PC-9 (cell line): ENCODE measurements at regions of chr13 and their contacts with region 1.

Region 1: GRCh38 chr13:99087096-99087953 is 109.5 kb upstream of the DOCK9 start:
- DNase-seq: peak; percentile 85 to 92
- H3K4me3 ChIP-seq: peak overlapping the region; percentile 84
- H3K27ac ChIP-seq: peak overlapping the region; percentile 72
- H3K4me1 ChIP-seq: peaks cover 37% of the 10 kb centered on the region
- H3K27me3 ChIP-seq: no peaks in the 10 kb centered on the region
- CTCF ChIP-seq: no peak; the same call in 1 of the 2 replicates

Region 2: DNA sequence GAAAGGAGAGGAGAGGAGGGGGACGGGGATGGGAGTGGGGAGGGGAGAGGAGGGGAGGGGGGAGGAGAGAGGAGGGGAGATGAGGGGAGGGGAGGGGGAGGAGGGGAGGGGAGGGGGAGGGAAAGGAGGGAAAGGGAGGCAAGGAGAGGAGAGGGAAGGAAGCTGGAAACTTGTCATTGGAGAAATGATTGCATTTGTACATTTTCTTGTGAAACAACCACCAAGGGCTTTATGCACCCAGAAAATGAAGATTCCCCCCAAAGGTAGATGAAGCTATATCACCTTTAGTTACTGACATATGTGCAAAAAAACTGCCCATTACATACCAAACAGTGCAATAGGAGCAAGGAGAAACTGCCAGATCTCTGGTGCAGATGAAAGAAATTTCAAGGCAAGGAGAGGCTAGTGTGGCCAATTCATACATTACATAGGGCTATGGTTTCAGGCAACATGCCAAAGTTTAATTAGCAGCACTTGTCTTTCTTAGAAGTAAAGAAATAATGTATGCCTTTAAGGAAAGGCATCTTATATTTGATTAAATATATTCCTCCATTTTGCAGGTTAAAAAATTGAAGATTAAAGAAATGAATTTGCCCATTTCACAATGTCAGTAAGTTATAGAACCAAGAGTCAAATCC is 460.9 kb before region 1 on chr13:
- CTCF ChIA-PET with region 1: interaction called, 10 read pairs
- POLR2A ChIA-PET with region 1: no interaction called
- intact Hi-C with region 1: no loop called
- DNase-seq: no peak
- H3K4me3 ChIP-seq: no peak overlapping the region
- H3K27ac ChIP-seq: no peak overlapping the region
- H3K4me1 ChIP-seq: no peaks in the 10 kb centered on the region
- H3K27me3 ChIP-seq: no peaks in the 10 kb centered on the region
- CTCF ChIP-seq: no peak

Region 3: GRCh38 chr13:99046851-99047250 is 40.5 kb before region 1 on chr13:
- CTCF ChIA-PET with region 1: interaction called, 5 read pairs
- POLR2A ChIA-PET with region 1: no interaction called
- intact Hi-C with region 1: loop called (anchors 2 kb)
- DNase-seq: no peak
- H3K4me3 ChIP-seq: peak overlapping the region; percentile 48
- H3K27ac ChIP-seq: peak overlapping the region; percentile 84
- H3K4me1 ChIP-seq: peaks cover 76% of the 10 kb centered on the region
- H3K27me3 ChIP-seq: no peaks in the 10 kb centered on the region
- CTCF ChIP-seq: no peak

Region 4: GRCh38 chr13:99124794-99125316 is 37.5 kb after region 1 on chr13:
- CTCF ChIA-PET with region 1: no interaction called
- POLR2A ChIA-PET with region 1: no interaction called
- intact Hi-C with region 1: no loop called
- DNase-seq: peak; percentile 3 to 74
- H3K4me3 ChIP-seq: peak overlapping the region; percentile 20; the same call in 1 of the 2 replicates
- H3K27ac ChIP-seq: no peak overlapping the region
- H3K4me1 ChIP-seq: peaks cover 11% of the 10 kb centered on the region; the same call in 1 of the 2 replicates
- H3K27me3 ChIP-seq: no peaks in the 10 kb centered on the region
- CTCF ChIP-seq: no peak

Region 5: GRCh38 chr13:99151516-99151915 is 64.2 kb after region 1 on chr13:
- CTCF ChIA-PET with region 1: no interaction called
- POLR2A ChIA-PET with region 1: interaction called, 4 read pairs
- intact Hi-C with region 1: loop called (anchors 1 kb)
- DNase-seq: peak; percentile 57 to 95
- H3K4me3 ChIP-seq: peak overlapping the region; percentile 26; the same call in 1 of the 2 replicates
- H3K27ac ChIP-seq: peak overlapping the region; percentile 90
- H3K4me1 ChIP-seq: peaks cover 57% of the 10 kb centered on the region
- H3K27me3 ChIP-seq: no peaks in the 10 kb centered on the region
- CTCF ChIP-seq: no peak

Region 6: DNA sequence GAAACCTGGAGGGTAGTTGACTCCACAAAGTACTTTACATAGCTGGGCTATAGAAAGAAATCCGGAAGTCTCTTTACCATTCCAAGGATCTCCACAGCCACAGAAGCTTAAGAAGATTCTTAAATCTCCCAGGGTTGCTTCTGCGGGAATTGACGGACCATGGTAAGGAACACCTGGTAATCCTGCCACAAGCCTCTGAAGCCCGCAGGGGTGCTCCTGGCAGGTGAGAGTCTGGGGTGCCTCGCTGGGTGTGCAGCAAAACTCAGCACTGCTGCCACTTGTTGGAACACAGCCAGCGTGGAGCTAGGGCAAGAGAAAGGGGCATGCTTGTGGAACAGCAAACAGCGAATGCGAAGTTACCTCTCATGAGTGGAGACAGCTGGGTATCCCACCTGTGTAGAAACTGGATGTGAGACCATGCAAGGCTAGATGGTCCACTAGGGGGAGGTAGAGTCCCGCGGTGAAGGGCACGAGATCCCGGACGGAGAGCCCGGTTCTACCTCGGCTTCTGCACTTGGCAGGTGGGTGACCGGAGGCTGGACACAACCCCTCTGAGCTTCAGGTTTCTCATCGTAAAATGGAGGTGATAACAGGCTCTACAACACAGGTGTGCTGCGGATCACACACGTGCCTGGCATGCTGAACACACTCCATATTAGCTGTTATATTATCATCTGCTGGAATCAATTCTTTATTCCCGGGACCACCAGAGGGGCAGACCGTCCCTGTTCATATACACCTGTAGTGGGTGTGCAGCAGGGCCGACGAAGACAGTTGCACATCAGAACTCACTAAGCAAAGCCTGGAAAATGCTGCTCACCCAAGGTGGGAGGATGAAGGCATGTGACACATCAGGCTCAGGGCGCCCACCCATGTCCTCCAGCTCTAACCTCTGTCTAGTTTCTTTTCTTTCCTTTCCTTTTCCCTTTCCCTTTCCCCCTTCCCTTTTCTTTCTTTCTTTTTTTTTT is 89.3 kb after region 1 on chr13:
- CTCF ChIA-PET with region 1: no interaction called
- POLR2A ChIA-PET with region 1: no interaction called
- intact Hi-C with region 1: loop called (anchors 2 kb)
- DNase-seq: peak; percentile 67 to 76
- H3K4me3 ChIP-seq: peak overlapping the region; percentile 47; the same call in 1 of the 2 replicates
- H3K27ac ChIP-seq: no peak overlapping the region
- H3K4me1 ChIP-seq: peaks cover 8% of the 10 kb centered on the region; the same call in 1 of the 2 replicates
- H3K27me3 ChIP-seq: no peaks in the 10 kb centered on the region
- CTCF ChIP-seq: peak; percentile 97